ENCODE measurements at regions of chr6 and their contacts with region 1.

Region 1: GRCh38 chr6:158629367-158630221 is 14.9 kb downstream of the DYNLT1 start:
- DNase-seq: no peak
- H3K4me3 ChIP-seq: no peak overlapping the region
- H3K27ac ChIP-seq: no peak overlapping the region
- H3K4me1 ChIP-seq: peaks cover 3 to 20% of the 10 kb centered on the region in 2 donors
- H3K27me3 ChIP-seq: no peaks in the 10 kb centered on the region
- CTCF ChIP-seq: no peak

Region 2: DNA sequence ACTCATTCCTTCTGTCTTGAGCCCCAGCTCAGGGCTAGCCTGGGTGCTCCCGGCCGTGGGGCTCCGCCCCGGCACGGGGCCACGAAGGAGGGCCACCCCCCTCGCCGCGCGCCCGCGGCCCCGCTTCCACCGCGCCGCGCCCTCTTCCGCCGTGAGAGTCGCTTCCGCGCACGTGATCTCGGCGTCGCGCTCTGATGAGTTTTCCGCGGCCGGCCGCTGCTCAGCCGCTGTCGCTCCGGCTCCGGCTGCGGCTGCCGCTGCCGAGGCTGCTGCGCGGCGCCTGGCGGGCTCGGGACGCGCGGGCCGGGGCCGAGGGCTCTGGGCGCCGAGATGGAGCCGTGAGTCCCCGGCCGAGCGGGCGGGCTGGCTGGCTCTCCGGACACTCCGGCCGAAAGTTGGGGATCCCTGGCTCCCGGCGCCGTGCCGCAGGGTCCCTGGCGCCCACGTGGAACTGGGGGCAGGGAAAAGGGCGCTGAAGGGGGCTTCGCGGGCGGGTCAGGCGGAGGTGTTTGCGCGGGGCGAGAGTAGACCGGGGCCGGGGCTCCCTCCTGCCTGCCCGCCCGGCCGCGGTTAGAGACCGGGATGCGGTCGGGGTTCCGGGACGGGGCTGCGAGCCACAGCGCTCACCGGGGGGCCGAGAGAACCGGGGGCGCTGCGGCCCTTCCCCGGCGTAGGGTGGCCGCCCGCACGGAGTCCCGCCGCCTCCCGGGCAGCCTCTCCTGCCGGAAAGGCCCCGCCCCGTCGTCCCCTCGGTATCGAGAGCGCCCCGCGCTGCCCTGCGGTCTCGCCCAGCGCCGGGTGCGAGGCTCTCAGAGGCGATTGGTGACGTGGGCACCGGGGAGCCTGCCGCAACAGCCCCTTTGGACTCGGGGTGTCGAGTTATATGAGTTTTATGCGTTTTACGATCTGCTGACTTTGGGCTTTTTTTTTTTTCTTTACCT is 69.4 kb before region 1 on chr6 and contains the start of gene TMEM181:
- intact Hi-C with region 1: loop called (anchors 5 kb)
- DNase-seq: peak in 1 of 2 donors; percentile 86
- H3K4me3 ChIP-seq: peak within 1 kb of the TSS; percentile 79 to 97
- H3K27ac ChIP-seq: peak within 1 kb of the TSS; percentile 91 to 93
- H3K4me1 ChIP-seq: peaks cover 7 to 10% of the 10 kb centered on the region in 2 donors
- H3K27me3 ChIP-seq: no peaks in the 10 kb centered on the region
- CTCF ChIP-seq: no peak
- total RNA-seq, gene TMEM181: 16.3 TPM

Region 3: DNA sequence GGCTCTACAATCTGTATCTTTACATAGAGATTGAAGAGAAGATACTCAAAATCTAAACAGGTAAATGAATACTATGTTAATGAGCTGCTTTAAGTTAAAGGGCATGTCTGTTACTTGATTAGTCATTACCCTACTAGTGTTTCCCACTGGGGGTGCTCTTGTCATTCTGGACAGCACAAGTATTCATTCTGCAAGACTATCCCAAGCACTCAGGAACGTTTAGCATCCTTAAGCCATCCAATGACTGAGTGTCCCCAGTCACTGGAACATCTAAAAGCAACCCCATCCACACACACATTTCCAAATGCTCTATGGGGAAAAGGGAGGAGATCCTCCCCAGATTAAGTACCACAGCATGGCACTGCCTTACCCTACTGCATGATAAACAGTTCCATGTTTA is 163.8 kb after region 1 on chr6:
- intact Hi-C with region 1: no loop called
- DNase-seq: no peak
- H3K4me3 ChIP-seq: no peak overlapping the region
- H3K27ac ChIP-seq: no peak overlapping the region
- H3K4me1 ChIP-seq: peaks cover 0 to 6% of the 10 kb centered on the region in 2 donors
- H3K27me3 ChIP-seq: no peaks in the 10 kb centered on the region
- CTCF ChIP-seq: peak in 2 of 3 experiments; percentile 5 to 22

Region 4: GRCh38 chr6:158910484-158911348 is 281.1 kb after region 1 on chr6:
- intact Hi-C with region 1: no loop called
- DNase-seq: no peak
- H3K4me3 ChIP-seq: no peak overlapping the region
- H3K27ac ChIP-seq: no peak overlapping the region
- H3K4me1 ChIP-seq: no peaks in the 10 kb centered on the region
- H3K27me3 ChIP-seq: no peaks in the 10 kb centered on the region
- CTCF ChIP-seq: no peak

Measured in ascending aorta (tissue), 2 donors.